Esophagus squamous epithelium (tissue), 5 donors: ENCODE measurements at regions of chr22 and their contacts with region 1.

Region 1: GRCh38 chr22:37199103-37199759 is 11.2 kb upstream of the C1QTNF6 start:
- DNase-seq: peak; percentile 62
- H3K4me3 ChIP-seq: peak overlapping the region; percentile 53 to 84 (median 79)
- H3K27ac ChIP-seq: peak overlapping the region; percentile 90 to 98 (median 97)
- H3K4me1 ChIP-seq: peaks cover 28 to 43% (median 30%) of the 10 kb centered on the region in 3 donors
- H3K27me3 ChIP-seq: no peaks in the 10 kb centered on the region
- CTCF ChIP-seq: peak; percentile 86 to 98 (median 94)
- POLR2A ChIP-seq: peak in 3 of 4 donors; percentile 95 to 99 (median 96)

Region 2: GRCh38 chr22:37079668-37080181 is 119.5 kb before region 1 on chr22:
- intact Hi-C with region 1: loop called (anchors 5 kb)
- DNase-seq: no peak
- H3K4me3 ChIP-seq: no peak overlapping the region
- H3K27ac ChIP-seq: peak overlapping the region in 2 of 4 donors; percentile 25 to 34
- H3K4me1 ChIP-seq: peaks cover 0 to 6% (median 0%) of the 10 kb centered on the region in 3 donors
- H3K27me3 ChIP-seq: peaks cover 0 to 49% (median 0%) of the 10 kb centered on the region in 4 donors
- CTCF ChIP-seq: no peak
- POLR2A ChIP-seq: no peak

Region 3: GRCh38 chr22:37166675-37167066 is 32.6 kb before region 1 on chr22:
- intact Hi-C with region 1: loop called (anchors 2 kb)
- DNase-seq: no peak
- H3K4me3 ChIP-seq: peak overlapping the region in 2 of 4 donors; percentile 16 to 45
- H3K27ac ChIP-seq: peak overlapping the region in 3 of 4 donors; percentile 48 to 61 (median 52)
- H3K4me1 ChIP-seq: peaks cover 9 to 34% (median 23%) of the 10 kb centered on the region in 3 donors
- H3K27me3 ChIP-seq: peaks cover 0 to 6% (median 0%) of the 10 kb centered on the region in 4 donors
- CTCF ChIP-seq: peak; percentile 79 to 95 (median 88)
- POLR2A ChIP-seq: no peak

Region 4: DNA sequence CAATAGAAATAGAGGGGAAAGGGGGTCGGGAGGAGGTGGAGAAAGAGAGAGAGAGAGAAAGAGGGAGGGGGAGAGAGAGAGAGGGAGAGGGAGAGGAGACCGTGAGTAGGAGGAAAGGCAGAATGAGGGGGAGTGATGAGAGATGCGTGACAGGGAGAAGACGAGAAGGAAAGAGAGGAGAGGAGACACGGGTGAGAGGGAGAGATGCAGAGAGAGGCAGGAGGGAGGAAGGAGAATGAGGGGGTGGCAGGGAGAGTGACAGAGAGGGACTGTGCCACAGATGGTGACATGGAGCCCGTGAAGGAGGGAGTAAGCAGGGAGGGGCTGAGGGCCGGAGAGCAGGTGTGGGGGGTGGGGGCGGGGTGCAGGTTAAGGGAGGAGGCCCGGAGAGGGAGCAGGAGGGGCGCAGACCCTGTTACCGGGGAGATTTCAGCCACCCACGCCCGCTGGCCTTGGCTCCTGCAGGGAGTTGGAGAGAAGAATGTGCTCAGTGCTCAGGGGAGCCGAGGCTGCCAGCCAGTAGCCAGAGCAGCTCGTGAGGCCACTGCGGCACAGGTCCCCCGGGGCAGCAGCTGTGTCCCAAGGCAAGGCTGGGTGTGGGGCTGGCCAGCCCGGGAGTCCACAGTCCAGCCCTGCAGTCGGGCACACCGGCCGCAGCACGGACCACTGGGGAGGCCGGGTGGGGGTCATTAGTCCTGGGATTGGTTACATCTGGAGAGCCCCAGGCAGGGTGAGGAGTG is 13.1 kb after region 1 on chr22 and contains the start of gene SSTR3:
- intact Hi-C with region 1: no loop called
- DNase-seq: no peak
- H3K4me3 ChIP-seq: no peak within 1 kb of the TSS
- H3K27ac ChIP-seq: no peak within 1 kb of the TSS
- H3K4me1 ChIP-seq: peaks cover 0 to 5% (median 0%) of the 10 kb centered on the region in 3 donors
- H3K27me3 ChIP-seq: peaks cover 0 to 47% (median 0%) of the 10 kb centered on the region in 4 donors
- CTCF ChIP-seq: no peak
- POLR2A ChIP-seq: no peak
- total RNA-seq, gene SSTR3: not detected

Region 5: DNA sequence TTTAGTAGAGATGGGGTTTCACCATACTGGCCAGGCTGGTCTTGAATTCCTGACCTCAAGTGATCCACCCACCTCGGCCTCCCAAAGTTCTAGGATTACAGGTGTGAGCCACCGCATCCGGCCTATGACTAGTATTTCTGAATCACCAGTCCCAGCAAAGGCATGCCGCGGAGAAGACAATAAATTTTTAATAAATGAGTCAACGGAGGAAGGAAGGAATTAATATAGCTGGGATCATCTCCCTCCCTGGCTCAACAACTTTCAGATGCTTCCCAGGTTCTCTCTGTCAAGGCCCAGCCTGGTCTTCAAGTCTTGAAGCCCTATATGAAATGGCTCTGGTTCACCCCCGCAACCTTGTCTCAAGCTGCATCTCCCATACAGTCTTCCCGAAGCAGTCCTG is 128.8 kb after region 1 on chr22:
- intact Hi-C with region 1: no loop called
- DNase-seq: no peak
- H3K4me3 ChIP-seq: no peak overlapping the region
- H3K27ac ChIP-seq: no peak overlapping the region
- H3K4me1 ChIP-seq: peaks cover 0 to 8% (median 0%) of the 10 kb centered on the region in 3 donors
- H3K27me3 ChIP-seq: peaks cover 8 to 98% (median 22%) of the 10 kb centered on the region in 4 donors
- CTCF ChIP-seq: no peak
- POLR2A ChIP-seq: no peak